Dendritic cell treated with granulocyte-macrophage colony-stimulating factor and Interleukin-4, amounts not matched to agents 40 ng/mL and 50 ng/mL, for 4 days (primary cell): ENCODE measurements at regions of chr3 and their contacts with region 1.

Region 1: DNA sequence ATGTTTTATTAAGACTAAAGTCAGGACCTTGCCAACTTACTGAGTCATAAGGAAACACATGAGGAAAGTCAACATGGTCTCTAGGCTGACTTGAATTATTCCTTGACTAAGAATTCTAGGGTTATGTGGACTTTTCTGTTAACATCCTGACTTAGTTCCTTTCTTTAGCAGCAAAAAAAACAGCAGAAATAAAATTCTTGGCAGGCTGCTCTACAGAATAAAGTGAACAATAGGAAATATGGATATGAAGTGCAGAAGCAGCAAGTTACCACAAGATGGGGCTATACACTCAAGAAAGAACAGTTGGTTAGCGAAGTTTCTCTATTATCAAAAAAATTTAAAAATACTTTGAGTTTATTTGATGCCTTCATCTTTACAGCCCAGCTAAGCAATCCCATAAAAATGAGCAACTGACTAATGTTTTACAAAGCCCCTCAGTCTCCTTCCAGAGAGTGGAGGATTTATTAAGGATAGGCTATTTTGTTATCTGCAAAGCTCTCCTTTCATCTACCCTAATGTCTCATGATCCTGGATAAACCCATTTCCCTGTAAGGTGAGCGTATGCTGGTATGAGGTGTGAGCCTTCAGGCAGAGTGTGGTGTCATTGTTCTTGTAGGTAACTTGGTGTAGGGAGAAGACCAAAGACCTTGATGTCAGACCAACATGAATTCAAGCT is 23.1 kb upstream of the MCCC1 start:
- H3K4me3 Mint-ChIP-seq: no peak overlapping the region
- H3K27ac Mint-ChIP-seq: no peak overlapping the region
- H3K4me1 Mint-ChIP-seq: peaks cover 7% of the 10 kb centered on the region
- H3K27me3 Mint-ChIP-seq: peaks cover 20% of the 10 kb centered on the region

Region 2: DNA sequence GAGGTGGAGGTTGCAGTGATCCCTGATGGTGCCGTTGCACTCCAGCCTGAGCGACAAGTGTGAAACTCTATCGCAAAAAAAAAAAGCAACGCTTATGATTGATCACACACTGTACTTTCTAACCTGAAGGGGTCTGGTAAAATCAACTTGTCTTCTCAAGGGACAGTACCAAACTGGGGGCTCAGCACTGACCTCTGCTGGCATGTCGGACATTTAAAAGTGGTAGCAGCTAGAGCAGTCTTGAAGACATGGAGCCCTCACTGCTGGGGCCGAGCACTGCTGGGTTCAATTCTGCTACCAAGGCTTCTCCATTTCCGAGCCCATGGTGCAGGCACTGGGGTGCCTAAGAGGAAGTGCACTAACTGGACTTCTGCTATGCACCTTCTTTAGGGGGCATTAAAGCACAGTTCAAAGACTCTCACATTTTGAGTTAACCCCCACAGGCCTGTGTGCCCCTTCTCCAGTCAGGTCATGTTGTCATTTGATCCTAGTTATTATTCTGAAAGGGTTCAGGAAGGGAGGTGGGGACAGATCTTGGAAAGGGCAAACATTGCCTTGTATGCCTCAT is 66.6 kb after region 1 on chr3:
- intact Hi-C with region 1: loop called (anchors 2 kb)
- H3K4me3 Mint-ChIP-seq: no peak overlapping the region
- H3K27ac Mint-ChIP-seq: peak overlapping the region; percentile 59
- H3K4me1 Mint-ChIP-seq: peaks cover 46% of the 10 kb centered on the region
- H3K27me3 Mint-ChIP-seq: no peaks in the 10 kb centered on the region

Region 3: GRCh38 chr3:183385698-183386613 is 263.6 kb after region 1 on chr3:
- intact Hi-C with region 1: loop called (anchors 1 kb)
- H3K4me3 Mint-ChIP-seq: no peak overlapping the region
- H3K27ac Mint-ChIP-seq: peak overlapping the region; percentile 39
- H3K4me1 Mint-ChIP-seq: peaks cover 17% of the 10 kb centered on the region
- H3K27me3 Mint-ChIP-seq: no peaks in the 10 kb centered on the region

Region 4: GRCh38 chr3:184066211-184066610 is 943.8 kb after region 1 on chr3:
- intact Hi-C with region 1: no loop called
- H3K4me3 Mint-ChIP-seq: no peak overlapping the region
- H3K27ac Mint-ChIP-seq: no peak overlapping the region
- H3K4me1 Mint-ChIP-seq: no peaks in the 10 kb centered on the region
- H3K27me3 Mint-ChIP-seq: peaks cover 8% of the 10 kb centered on the region